ENCODE measurements at regions of chr6 and their contacts with region 1.

Region 1: DNA sequence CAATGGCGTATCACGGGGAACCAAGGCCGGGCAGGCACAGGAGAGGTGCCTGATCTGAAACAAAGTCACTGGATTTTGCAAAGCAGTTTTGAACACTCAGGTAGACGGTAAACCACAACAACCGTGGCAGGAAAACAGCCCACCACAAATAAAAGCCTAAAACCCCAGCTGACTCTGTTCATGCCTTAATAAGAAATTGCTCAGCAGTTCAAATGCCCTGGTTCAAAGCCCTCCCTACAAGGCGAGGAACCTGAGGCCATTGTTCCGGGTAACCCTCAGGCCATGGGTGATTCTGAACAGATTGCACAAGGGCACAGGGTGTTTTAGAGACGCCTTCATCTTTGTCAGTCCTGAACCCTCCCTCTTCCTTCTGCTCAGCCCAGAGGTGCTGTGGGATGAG is 114.1 kb downstream of the MAP3K7 start:
- DNase-seq: no peak
- ATAC-seq: peak; percentile 7; the same call in 1 of the 3 replicates
- H3K4me3 ChIP-seq: no peak overlapping the region
- H3K27ac ChIP-seq: no peak overlapping the region
- H3K4me1 ChIP-seq: peaks cover 16% of the 10 kb centered on the region
- H3K27me3 ChIP-seq: no peaks in the 10 kb centered on the region; a peak in 1 of 4 replicates
- CTCF ChIP-seq: no peak
- EP300 ChIP-seq: no peak
- POLR2A ChIP-seq: no peak
- RAD21 ChIP-seq: no peak

Region 2: DNA sequence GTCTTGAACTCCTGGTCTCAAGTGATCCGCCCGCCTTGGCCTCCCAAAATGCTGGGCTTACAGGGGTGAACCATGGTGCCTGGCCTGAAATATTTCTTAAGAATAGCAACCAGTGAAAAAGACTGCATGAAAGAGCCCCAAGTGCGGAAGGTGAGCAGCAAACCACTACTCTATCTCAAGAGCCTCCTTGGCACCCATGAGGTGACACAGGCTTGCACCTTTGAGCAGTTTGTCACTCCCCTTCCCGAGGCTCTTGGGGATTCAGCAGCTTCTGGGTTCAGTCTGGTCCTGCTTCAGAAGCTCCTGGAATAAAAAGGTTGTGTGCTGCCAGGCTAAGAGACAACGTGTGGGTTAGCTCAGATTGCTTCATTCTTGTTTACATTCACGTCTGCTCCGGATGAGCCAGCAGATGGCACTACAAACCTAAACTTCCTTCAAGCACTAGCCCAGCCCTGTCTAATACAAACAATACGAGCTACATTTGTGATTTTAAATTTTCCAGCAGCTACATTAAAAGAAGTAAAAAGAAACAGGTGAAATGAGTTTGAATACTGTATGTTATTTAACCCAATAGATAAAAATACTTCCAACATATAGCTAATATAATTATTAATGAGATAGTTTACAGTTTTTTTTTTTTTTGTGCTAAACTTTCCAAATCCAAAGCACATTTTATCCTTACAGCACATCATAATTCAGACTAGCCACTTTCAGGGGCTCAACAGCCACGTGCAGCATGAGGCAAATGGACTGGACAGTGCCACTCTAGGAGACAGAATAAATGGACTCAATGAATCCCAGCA is 532.3 kb before region 1 on chr6:
- CTCF ChIA-PET with region 1: interaction called, 193 read pairs
- POLR2A ChIA-PET with region 1: no interaction called
- RAD21 ChIA-PET with region 1: interaction called, 104 read pairs
- SMC1A ChIA-PET with region 1: interaction called, 97 read pairs
- in situ Hi-C with region 1: loop called (anchors 5 kb)
- intact Hi-C with region 1: no loop called
- DNase-seq: peak; percentile 21
- ATAC-seq: peak; percentile 99
- H3K4me3 ChIP-seq: no peak overlapping the region
- H3K27ac ChIP-seq: no peak overlapping the region
- H3K4me1 ChIP-seq: no peaks in the 10 kb centered on the region
- H3K27me3 ChIP-seq: no peaks in the 10 kb centered on the region; a peak in 3 of 4 replicates
- CTCF ChIP-seq: peak; percentile 64 to 83 (median 71)
- EP300 ChIP-seq: no peak
- POLR2A ChIP-seq: no peak
- RAD21 ChIP-seq: peak; percentile 92

Region 3: DNA sequence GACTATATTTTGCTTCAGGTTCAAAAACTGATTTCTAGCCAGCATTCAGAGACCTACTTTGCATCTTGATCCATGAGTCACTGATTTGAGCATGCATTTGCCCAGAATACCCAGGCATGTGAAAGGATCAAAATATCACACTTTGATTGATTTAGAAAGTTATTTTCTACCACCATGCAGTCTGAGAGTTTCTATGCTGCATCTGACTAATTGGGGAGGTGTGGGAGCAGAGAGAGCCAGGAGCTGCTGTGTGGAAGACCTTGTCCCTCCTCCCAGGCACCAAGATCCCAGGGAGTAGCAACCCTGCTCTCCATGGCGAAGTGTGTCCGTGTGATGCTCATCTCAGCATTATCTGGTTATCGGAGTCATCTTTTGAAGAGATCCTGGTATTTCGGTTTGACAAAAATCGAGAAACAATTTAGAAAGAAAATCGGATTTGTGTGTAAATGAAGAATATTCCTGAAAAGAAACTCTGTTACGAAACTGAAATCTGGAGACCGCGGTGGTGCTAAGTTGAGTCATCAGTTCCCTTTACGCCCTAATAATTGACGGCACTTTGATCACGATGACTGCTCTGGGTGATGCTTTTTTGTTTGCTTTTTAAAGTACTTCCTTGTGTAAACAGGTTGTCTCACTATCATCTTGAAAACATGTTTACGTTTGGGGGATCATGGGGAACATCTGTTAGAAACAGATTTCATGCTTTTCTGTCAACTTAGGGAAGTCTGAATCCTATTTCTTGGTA is 369.5 kb before region 1 on chr6:
- CTCF ChIA-PET with region 1: interaction called, 4 read pairs
- POLR2A ChIA-PET with region 1: no interaction called
- RAD21 ChIA-PET with region 1: no interaction called
- SMC1A ChIA-PET with region 1: no interaction called
- in situ Hi-C with region 1: loop called (anchors 10 kb)
- intact Hi-C with region 1: loop called (anchors 5 kb)
- DNase-seq: peak; percentile 65
- ATAC-seq: peak; percentile 86
- H3K4me3 ChIP-seq: no peak overlapping the region
- H3K27ac ChIP-seq: no peak overlapping the region
- H3K4me1 ChIP-seq: peaks cover 14% of the 10 kb centered on the region
- H3K27me3 ChIP-seq: peaks cover 0 to 4% of the 10 kb centered on the region in 2 experiments; a peak in 1 of 4 replicates
- CTCF ChIP-seq: no peak
- EP300 ChIP-seq: peak; percentile 75 to 88
- POLR2A ChIP-seq: no peak
- RAD21 ChIP-seq: no peak